Natural killer cell (primary cell): ENCODE measurements at regions of chr17 and their contacts with region 1.

Region 1: GRCh38 chr17:82037113-82037888 is at the start of gene DCXR:
- DNase-seq: peak; percentile 94 to 96
- ATAC-seq: peak; percentile 90 to 98 (median 91)
- H3K4me3 ChIP-seq: peak within 1 kb of the TSS; percentile 69
- H3K4me3 Mint-ChIP-seq: peak within 1 kb of the TSS; percentile 94
- H3K27ac ChIP-seq: peak within 1 kb of the TSS; percentile 78
- H3K27ac Mint-ChIP-seq: peak within 1 kb of the TSS; percentile 90 to 94
- H3K4me1 ChIP-seq: peaks cover 22% of the 10 kb centered on the region
- H3K4me1 Mint-ChIP-seq: peaks cover 7 to 22% of the 10 kb centered on the region in 2 donors
- H3K27me3 ChIP-seq: no peaks in the 10 kb centered on the region
- H3K27me3 Mint-ChIP-seq: no peaks in the 10 kb centered on the region
- CTCF ChIP-seq: peak; percentile 91
- total RNA-seq, gene DCXR: 93.9 to 171 (median 145) TPM

Region 2: GRCh38 chr17:81460856-81461460 is 576.3 kb before region 1 on chr17:
- intact Hi-C with region 1: no loop called
- DNase-seq: peak in 1 of 2 donors; percentile 38
- ATAC-seq: peak in 2 of 3 donors; percentile 56 to 65
- H3K4me3 ChIP-seq: no peak overlapping the region
- H3K4me3 Mint-ChIP-seq: peak overlapping the region; percentile 17
- H3K27ac ChIP-seq: no peak overlapping the region
- H3K27ac Mint-ChIP-seq: no peak overlapping the region
- H3K4me1 ChIP-seq: peaks cover 35% of the 10 kb centered on the region
- H3K4me1 Mint-ChIP-seq: peaks cover 5 to 25% of the 10 kb centered on the region in 2 donors
- H3K27me3 ChIP-seq: peaks cover 7% of the 10 kb centered on the region
- H3K27me3 Mint-ChIP-seq: peaks cover 0 to 12% of the 10 kb centered on the region in 2 donors
- CTCF ChIP-seq: no peak

Region 3: GRCh38 chr17:81959362-81960129 is 77.8 kb before region 1 on chr17:
- intact Hi-C with region 1: loop called (anchors 5 kb)
- DNase-seq: peak; percentile 84 to 93
- ATAC-seq: peak; percentile 95 to 96 (median 96)
- H3K4me3 ChIP-seq: peak overlapping the region; percentile 7
- H3K4me3 Mint-ChIP-seq: peak overlapping the region; percentile 68
- H3K27ac ChIP-seq: no peak overlapping the region
- H3K27ac Mint-ChIP-seq: no peak overlapping the region
- H3K4me1 ChIP-seq: peaks cover 28% of the 10 kb centered on the region
- H3K4me1 Mint-ChIP-seq: no peaks in the 10 kb centered on the region
- H3K27me3 ChIP-seq: peaks cover 25% of the 10 kb centered on the region
- H3K27me3 Mint-ChIP-seq: peaks cover 19 to 28% of the 10 kb centered on the region in 2 donors
- CTCF ChIP-seq: peak; percentile 87

Region 4: DNA sequence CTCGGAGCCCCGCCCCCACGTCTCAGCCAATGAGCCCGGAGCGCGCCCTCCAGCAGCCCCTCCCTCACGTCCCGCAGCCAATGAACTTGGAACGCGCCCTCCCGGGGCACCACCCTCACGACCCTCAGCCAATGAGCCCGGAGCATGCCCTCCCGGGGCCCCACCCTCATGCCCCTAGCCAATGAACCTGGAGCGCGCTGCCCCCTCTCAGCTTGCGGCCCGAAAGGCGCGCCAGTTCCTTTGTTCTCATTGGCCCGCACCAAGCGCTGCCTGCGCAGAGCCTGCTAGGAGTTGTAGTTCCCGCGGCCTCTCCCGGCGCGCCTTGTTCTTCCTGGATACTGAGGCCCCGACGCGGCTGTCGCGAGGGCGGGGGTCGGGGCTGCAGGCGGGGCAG is 14.3 kb before region 1 on chr17 and contains the start of gene LRRC45:
- intact Hi-C with region 1: loop called (anchors 1 kb)
- DNase-seq: peak; percentile 99
- ATAC-seq: peak; percentile 94 to 99 (median 94)
- H3K4me3 ChIP-seq: peak within 1 kb of the TSS; percentile 77
- H3K4me3 Mint-ChIP-seq: peak within 1 kb of the TSS; percentile 83
- H3K27ac ChIP-seq: peak within 1 kb of the TSS; percentile 38
- H3K27ac Mint-ChIP-seq: peak within 1 kb of the TSS in 1 of 2 donors; percentile 92
- H3K4me1 ChIP-seq: peaks cover 29% of the 10 kb centered on the region
- H3K4me1 Mint-ChIP-seq: peaks cover 7 to 34% of the 10 kb centered on the region in 2 donors
- H3K27me3 ChIP-seq: no peaks in the 10 kb centered on the region
- H3K27me3 Mint-ChIP-seq: no peaks in the 10 kb centered on the region
- CTCF ChIP-seq: no peak
- total RNA-seq, gene LRRC45: 15.9 to 21.6 (median 16.8) TPM

Region 5: DNA sequence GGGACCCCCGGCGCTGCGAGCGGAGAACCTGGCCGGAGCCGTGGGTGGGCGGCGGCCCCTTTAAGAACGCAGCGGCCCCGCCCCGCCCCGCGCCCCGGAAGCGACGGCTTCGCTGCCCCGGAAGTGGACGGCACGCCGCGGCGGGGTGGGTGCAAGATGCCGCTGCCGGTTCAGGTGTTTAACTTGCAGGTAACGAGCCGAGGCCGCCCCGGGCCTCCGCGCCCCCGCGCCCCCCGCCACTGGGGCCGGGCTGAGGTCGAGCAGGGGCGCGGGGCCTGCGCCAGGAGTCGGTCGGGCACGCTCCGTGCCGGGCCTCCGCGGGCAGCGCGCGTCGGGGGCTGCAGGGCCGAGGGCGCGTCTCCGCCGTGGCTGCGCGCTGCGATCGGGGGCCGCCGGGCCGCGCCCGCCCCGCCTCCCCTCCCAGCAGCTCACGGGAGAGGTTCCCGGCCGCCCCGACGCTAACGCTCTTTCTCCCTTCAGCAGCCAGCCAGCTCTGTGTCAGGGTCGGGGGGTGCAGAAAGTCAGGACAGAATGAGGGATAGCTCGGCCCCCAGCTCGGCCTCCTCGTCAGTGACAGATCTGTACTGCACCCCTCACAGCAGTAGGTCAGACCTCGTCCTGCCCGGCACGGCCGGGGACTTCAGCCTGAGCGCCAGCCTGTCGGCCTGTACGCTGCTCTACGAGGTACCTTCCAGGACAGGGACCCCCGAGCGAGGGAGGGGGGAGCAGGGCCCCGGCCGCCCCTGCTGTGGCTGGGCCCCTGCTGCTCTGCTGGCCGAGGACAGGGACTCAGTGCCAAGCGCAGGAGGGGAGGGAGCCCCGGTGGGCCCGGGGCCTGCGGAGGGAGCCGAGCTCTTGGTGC is 14.7 kb after region 1 on chr17 and contains the starts of genes GPS1 and RFNG:
- intact Hi-C with region 1: loop called (anchors 1 kb)
- DNase-seq: peak; percentile 73 to 86
- ATAC-seq: peak; percentile 86 to 97 (median 95)
- H3K4me3 ChIP-seq: peak within 1 kb of the TSS; percentile 77
- H3K4me3 Mint-ChIP-seq: peak within 1 kb of the TSS; percentile 87
- H3K27ac ChIP-seq: no peak within 1 kb of the TSS
- H3K27ac Mint-ChIP-seq: peak within 1 kb of the TSS in 1 of 2 donors; percentile 71
- H3K4me1 ChIP-seq: peaks cover 30% of the 10 kb centered on the region
- H3K4me1 Mint-ChIP-seq: peaks cover 0 to 16% of the 10 kb centered on the region in 2 donors
- H3K27me3 ChIP-seq: no peaks in the 10 kb centered on the region
- H3K27me3 Mint-ChIP-seq: no peaks in the 10 kb centered on the region
- CTCF ChIP-seq: no peak
- total RNA-seq, gene GPS1: 78.9 to 87.6 (median 85.3) TPM
- total RNA-seq, gene RFNG: 22.7 to 26.7 (median 23.2) TPM